GM12878 (cell line): ENCODE measurements at regions of chr6 and their contacts with region 1.

Region 1: GRCh38 chr6:42043787-42044475 is 6.4 kb upstream of the TAF8 start:
- DNase-seq: peak; percentile 68
- ATAC-seq: peak; percentile 79
- H3K4me3 ChIP-seq: peak overlapping the region; percentile 2; the same call in 1 of the 2 replicates
- H3K27ac ChIP-seq: peak overlapping the region; percentile 25; the same call in 1 of the 2 replicates
- H3K4me1 ChIP-seq: peaks cover 43% of the 10 kb centered on the region
- H3K27me3 ChIP-seq: no peaks in the 10 kb centered on the region
- CTCF ChIP-seq: peak; percentile 95 to 99 (median 98); a peak in 5 of 6 replicates
- EP300 ChIP-seq: no peak
- POLR2A ChIP-seq: no peak
- RAD21 ChIP-seq: peak; percentile 100

Region 2: GRCh38 chr6:41306187-41306854 is 737.6 kb before region 1 on chr6:
- CTCF ChIA-PET with region 1: no interaction called
- POLR2A ChIA-PET with region 1: no interaction called
- RAD21 ChIA-PET with region 1: no interaction called
- SMC1A ChIA-PET with region 1: no interaction called
- in situ Hi-C with region 1: no loop called
- intact Hi-C with region 1: no loop called
- DNase-seq: no peak
- ATAC-seq: peak; percentile 68
- H3K4me3 ChIP-seq: no peak overlapping the region
- H3K27ac ChIP-seq: no peak overlapping the region
- H3K4me1 ChIP-seq: peaks cover 3% of the 10 kb centered on the region; the same call in 1 of the 2 replicates
- H3K27me3 ChIP-seq: no peaks in the 10 kb centered on the region; a peak in 1 of 4 replicates
- CTCF ChIP-seq: peak; percentile 50 to 66 (median 63)
- EP300 ChIP-seq: no peak
- POLR2A ChIP-seq: no peak
- RAD21 ChIP-seq: peak; percentile 74

Region 3: GRCh38 chr6:41602864-41603608 is 440.9 kb before region 1 on chr6:
- CTCF ChIA-PET with region 1: interaction called, 3 read pairs
- POLR2A ChIA-PET with region 1: no interaction called
- RAD21 ChIA-PET with region 1: no interaction called
- SMC1A ChIA-PET with region 1: no interaction called
- in situ Hi-C with region 1: loop called (anchors 10 kb)
- intact Hi-C with region 1: loop called (anchors 10 kb)
- DNase-seq: peak; percentile 24
- ATAC-seq: peak; percentile 94
- H3K4me3 ChIP-seq: no peak overlapping the region
- H3K27ac ChIP-seq: no peak overlapping the region
- H3K4me1 ChIP-seq: no peaks in the 10 kb centered on the region
- H3K27me3 ChIP-seq: no peaks in the 10 kb centered on the region; a peak in 1 of 4 replicates
- CTCF ChIP-seq: peak; percentile 93 to 96 (median 96)
- EP300 ChIP-seq: no peak
- POLR2A ChIP-seq: no peak
- RAD21 ChIP-seq: peak; percentile 90

Region 4: GRCh38 chr6:41787219-41787917 is 256.6 kb before region 1 on chr6 and contains the start of gene TOMM6:
- CTCF ChIA-PET with region 1: interaction called, 141 read pairs
- POLR2A ChIA-PET with region 1: interaction called, 30 read pairs
- RAD21 ChIA-PET with region 1: interaction called, 80 read pairs
- SMC1A ChIA-PET with region 1: interaction called, 54 read pairs
- in situ Hi-C with region 1: loop called (anchors 5 kb)
- intact Hi-C with region 1: loop called (anchors 1 kb)
- DNase-seq: peak; percentile 77
- ATAC-seq: peak; percentile 90
- H3K4me3 ChIP-seq: peak within 1 kb of the TSS; percentile 100
- H3K27ac ChIP-seq: peak within 1 kb of the TSS; percentile 93
- H3K4me1 ChIP-seq: peaks cover 22% of the 10 kb centered on the region
- H3K27me3 ChIP-seq: no peaks in the 10 kb centered on the region
- CTCF ChIP-seq: peak; percentile 84 to 89 (median 88)
- EP300 ChIP-seq: no peak
- POLR2A ChIP-seq: peak; percentile 89
- RAD21 ChIP-seq: no peak
- polyA plus RNA-seq, gene TOMM6: 653 to 729 TPM

Region 5: DNA sequence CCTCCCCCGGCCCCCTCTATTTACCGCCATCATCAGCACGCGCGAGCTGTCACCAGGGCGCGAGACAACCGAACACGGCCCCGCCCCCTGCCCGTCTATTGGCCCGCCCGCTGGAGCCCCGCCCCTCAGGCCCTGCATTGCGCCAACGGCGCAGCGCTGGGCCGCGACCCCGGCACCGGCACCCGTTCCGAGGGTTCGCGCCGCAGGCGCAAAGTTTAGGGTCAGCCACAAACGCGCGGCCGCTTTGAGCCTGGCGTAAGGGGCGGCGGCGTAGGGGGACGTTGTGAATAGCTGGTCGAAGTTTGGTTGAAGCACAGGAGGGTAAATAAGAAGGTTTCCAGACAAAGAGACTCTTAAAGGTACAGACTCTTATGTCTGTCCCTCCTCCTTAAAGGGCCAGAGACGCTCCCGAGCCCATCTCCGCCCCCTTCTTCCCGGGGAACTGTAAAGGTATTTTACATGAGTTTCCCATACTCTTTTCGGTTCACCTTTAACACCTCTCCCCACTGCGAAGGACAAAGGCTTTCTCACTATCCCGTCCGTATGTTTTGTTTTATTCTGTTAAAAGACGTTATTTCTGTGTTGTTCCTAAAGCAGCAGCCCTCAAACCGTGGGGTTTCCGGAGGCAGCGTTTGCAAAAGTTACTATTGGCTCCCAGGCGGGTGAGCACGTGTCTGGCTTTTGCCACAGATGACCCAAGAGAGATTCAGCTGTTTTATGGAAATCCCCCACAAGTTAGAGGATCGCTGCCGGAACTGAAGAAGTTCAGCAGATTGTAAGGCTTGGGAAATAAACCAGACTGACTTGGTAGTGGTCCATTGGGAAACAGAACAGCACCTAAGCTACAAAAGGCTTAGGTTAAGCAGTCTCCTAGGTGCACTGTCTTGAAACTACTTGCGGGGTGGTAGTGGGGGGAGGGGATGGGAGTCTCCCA is 148.4 kb before region 1 on chr6 and contains the start of gene USP49:
- CTCF ChIA-PET with region 1: interaction called, 51 read pairs
- POLR2A ChIA-PET with region 1: interaction called, 6 read pairs
- RAD21 ChIA-PET with region 1: interaction called, 29 read pairs
- SMC1A ChIA-PET with region 1: interaction called, 15 read pairs
- in situ Hi-C with region 1: no loop called
- intact Hi-C with region 1: no loop called
- DNase-seq: peak; percentile 65
- ATAC-seq: peak; percentile 96
- H3K4me3 ChIP-seq: peak within 1 kb of the TSS; percentile 89
- H3K27ac ChIP-seq: peak within 1 kb of the TSS; percentile 90
- H3K4me1 ChIP-seq: peaks cover 6% of the 10 kb centered on the region; the same call in 1 of the 2 replicates
- H3K27me3 ChIP-seq: no peaks in the 10 kb centered on the region
- CTCF ChIP-seq: no peak
- EP300 ChIP-seq: no peak
- POLR2A ChIP-seq: peak; percentile 75
- RAD21 ChIP-seq: no peak
- polyA plus RNA-seq, gene USP49: 1.0 TPM

Region 6: GRCh38 chr6:41936073-41936837 is 107.7 kb before region 1 on chr6:
- CTCF ChIA-PET with region 1: interaction called, 193 read pairs
- POLR2A ChIA-PET with region 1: interaction called, 8 read pairs
- RAD21 ChIA-PET with region 1: interaction called, 69 read pairs
- SMC1A ChIA-PET with region 1: interaction called, 138 read pairs
- in situ Hi-C with region 1: loop called (anchors 10 kb)
- intact Hi-C with region 1: loop called (anchors 1 kb)
- DNase-seq: peak; percentile 53
- ATAC-seq: peak; percentile 83
- H3K4me3 ChIP-seq: no peak overlapping the region
- H3K27ac ChIP-seq: peak overlapping the region; percentile 60
- H3K4me1 ChIP-seq: peaks cover 43% of the 10 kb centered on the region
- H3K27me3 ChIP-seq: no peaks in the 10 kb centered on the region
- CTCF ChIP-seq: peak; percentile 84 to 94 (median 91)
- EP300 ChIP-seq: no peak
- POLR2A ChIP-seq: peak; percentile 35
- RAD21 ChIP-seq: peak; percentile 68

Region 7: DNA sequence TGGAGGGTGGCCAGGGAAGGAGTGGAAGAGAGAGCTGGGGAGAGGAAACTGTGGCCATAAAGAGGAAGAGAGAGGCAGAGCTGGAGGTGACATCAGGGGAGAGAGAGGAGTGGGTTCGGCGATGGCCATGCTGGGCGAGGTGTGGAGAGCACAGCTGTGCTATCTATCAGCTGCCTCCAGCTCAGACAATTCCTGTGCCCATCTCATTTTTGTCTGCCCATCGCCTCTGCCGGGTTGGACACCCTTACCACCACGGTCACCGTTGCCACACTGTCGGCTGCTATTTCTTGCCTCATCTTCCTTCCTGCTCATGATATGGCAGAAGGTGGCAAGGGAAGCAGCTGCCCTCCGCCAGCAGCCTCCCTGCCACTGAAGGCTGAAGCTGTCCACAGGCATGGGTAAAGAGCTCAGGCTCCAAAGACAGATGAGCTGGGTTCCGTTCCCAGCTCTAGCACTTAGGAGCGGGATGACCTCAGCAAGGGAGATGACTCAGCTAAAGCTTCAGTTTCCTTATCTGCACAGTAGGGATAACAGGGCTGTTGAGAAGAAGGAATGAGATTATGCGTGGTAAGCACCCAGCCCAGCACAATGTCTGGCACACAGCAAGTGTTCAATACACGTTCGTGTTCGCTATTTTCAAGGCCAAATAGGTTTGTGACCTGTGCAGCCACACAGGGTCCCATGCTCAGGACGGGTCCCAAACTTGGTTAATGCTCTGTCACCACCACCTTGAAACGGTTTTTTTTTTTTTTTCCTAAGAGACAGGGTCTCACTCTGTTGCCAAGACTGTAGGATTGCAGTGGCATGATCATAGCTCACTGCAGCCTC is 15.5 kb before region 1 on chr6:
- CTCF ChIA-PET with region 1: interaction called, 12 read pairs
- POLR2A ChIA-PET with region 1: interaction called, 6 read pairs
- RAD21 ChIA-PET with region 1: interaction called, 15 read pairs
- SMC1A ChIA-PET with region 1: interaction called, 11 read pairs
- in situ Hi-C with region 1: no loop called
- intact Hi-C with region 1: no loop called
- DNase-seq: no peak
- ATAC-seq: no peak
- H3K4me3 ChIP-seq: no peak overlapping the region
- H3K27ac ChIP-seq: peak overlapping the region; percentile 13; the same call in 1 of the 2 replicates
- H3K4me1 ChIP-seq: peaks cover 50% of the 10 kb centered on the region
- H3K27me3 ChIP-seq: no peaks in the 10 kb centered on the region
- CTCF ChIP-seq: no peak
- EP300 ChIP-seq: no peak
- POLR2A ChIP-seq: no peak
- RAD21 ChIP-seq: no peak